ENCODE measurements at regions of chr16 and their contacts with region 1.

Region 1: GRCh38 chr16:12573730-12574383 is 229.8 kb downstream of the CPPED1 start:
- DNase-seq: peak; percentile 89
- ATAC-seq: peak; percentile 91
- H3K4me3 Mint-ChIP-seq: no peak overlapping the region
- H3K27ac Mint-ChIP-seq: peak overlapping the region; percentile 31
- H3K4me1 Mint-ChIP-seq: peaks cover 12% of the 10 kb centered on the region
- H3K27me3 Mint-ChIP-seq: no peaks in the 10 kb centered on the region

Region 2: GRCh38 chr16:12907670-12908233 is 333.9 kb after region 1 on chr16:
- CTCF ChIA-PET with region 1: interaction called, 5 read pairs
- POLR2A ChIA-PET with region 1: no interaction called
- intact Hi-C with region 1: loop called in 1 of 2 experiments (anchors 2 kb)
- DNase-seq: peak; percentile 24
- ATAC-seq: no peak
- H3K4me3 Mint-ChIP-seq: no peak overlapping the region
- H3K27ac Mint-ChIP-seq: no peak overlapping the region
- H3K4me1 Mint-ChIP-seq: peaks cover 1% of the 10 kb centered on the region
- H3K27me3 Mint-ChIP-seq: peaks cover 49% of the 10 kb centered on the region

Region 3: DNA sequence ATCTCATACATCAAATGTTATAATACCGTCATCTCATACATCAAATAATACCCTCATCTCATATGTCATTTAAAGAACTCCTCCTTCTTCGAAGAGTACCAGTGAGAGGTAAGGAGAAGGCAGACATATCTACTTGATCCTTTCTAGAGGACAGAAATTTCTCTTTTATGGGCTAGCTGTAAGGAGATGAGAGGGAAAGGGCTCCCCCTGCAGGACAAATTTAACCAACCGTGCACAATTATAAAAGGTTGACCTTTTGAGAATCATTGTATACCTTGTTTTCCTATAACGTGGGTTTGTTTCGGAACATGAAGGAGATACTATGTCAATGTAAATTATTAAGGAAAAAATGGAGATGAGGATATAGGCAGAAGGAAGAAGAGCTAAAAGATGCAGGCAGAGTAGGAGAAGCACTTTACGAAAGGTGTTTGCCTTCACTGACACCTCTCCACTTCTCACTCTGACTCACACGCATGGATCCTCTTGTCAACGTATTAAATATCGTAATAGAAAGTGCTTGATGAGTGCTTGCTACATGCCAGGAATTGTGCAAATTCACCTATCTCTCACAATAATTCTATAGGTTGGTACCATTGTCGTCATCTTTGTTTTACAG is 880.2 kb after region 1 on chr16:
- CTCF ChIA-PET with region 1: no interaction called
- POLR2A ChIA-PET with region 1: no interaction called
- intact Hi-C with region 1: loop called in 1 of 2 experiments (anchors 5 kb)
- DNase-seq: peak; percentile 56
- ATAC-seq: no peak
- H3K4me3 Mint-ChIP-seq: no peak overlapping the region
- H3K27ac Mint-ChIP-seq: no peak overlapping the region
- H3K4me1 Mint-ChIP-seq: no peaks in the 10 kb centered on the region
- H3K27me3 Mint-ChIP-seq: peaks cover 15% of the 10 kb centered on the region

Measured in activated CD4-positive, alpha-beta T cell treated with anti-CD3 and anti-CD28 coated beads for 36 hours (primary cell).